ENCODE measurements at regions of chr20 and their contacts with region 1.

Region 1: GRCh38 chr20:11676630-11677284 is 240.9 kb upstream of the BTBD3 start:
- DNase-seq: peak; percentile 61
- H3K4me3 Mint-ChIP-seq: no peak overlapping the region
- H3K27ac Mint-ChIP-seq: no peak overlapping the region
- H3K4me1 Mint-ChIP-seq: no peaks in the 10 kb centered on the region
- H3K27me3 Mint-ChIP-seq: no peaks in the 10 kb centered on the region
- CTCF ChIP-seq: peak; percentile 93

Region 2: GRCh38 chr20:11929947-11930346 is 253.2 kb after region 1 on chr20:
- CTCF ChIA-PET with region 1: no interaction called
- POLR2A ChIA-PET with region 1: no interaction called
- intact Hi-C with region 1: no loop called
- DNase-seq: no peak
- H3K4me3 Mint-ChIP-seq: no peak overlapping the region
- H3K27ac Mint-ChIP-seq: no peak overlapping the region
- H3K4me1 Mint-ChIP-seq: no peaks in the 10 kb centered on the region
- H3K27me3 Mint-ChIP-seq: no peaks in the 10 kb centered on the region
- CTCF ChIP-seq: no peak

Region 3: DNA sequence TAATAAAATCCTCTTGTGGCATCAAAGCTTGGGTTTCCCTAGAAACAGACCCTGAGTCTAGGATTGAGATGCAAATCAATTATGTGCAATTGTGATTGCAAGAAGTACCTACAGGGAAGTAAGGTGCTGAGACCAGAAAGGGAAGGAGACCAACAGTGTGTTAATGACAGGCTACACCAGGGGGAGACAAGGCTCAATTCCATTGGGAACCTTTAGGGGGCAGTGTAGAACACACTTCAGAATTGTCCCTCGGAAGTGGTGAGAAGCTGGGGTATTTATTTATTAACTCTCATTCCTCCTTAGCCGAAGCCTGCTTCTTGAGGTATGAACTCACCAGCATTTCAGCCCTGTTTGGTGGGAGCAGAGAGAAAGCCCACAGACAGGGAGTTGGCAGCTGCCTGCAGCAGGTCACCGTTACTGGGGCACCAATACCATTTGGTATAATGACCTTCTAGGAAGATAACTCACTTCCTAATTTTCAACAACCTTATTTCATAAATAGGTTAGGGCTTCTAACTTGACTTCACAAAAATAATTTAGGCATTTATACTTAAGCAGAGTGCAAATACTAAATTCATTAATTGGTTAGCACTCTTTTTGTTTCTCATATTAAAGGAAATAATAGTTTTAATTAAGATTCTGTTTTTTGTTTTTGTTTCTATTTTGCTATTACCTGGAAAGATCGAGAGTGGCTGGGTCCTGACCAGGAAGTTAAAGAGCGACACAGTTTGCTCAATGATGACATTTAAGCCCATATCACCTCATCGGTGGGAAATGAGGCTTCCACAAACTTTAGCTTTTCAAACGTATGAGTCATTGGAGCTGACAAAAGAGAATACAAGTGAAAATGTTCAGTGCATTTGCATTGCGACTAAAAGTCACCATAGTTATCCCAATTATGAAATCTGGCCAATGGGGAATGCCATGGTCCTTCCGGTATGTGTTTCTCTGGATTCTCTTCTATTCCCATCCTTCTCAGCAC is 335.8 kb after region 1 on chr20:
- CTCF ChIA-PET with region 1: interaction called, 3 read pairs
- POLR2A ChIA-PET with region 1: no interaction called
- intact Hi-C with region 1: loop called (anchors 2 kb)
- DNase-seq: peak; percentile 75
- H3K4me3 Mint-ChIP-seq: no peak overlapping the region
- H3K27ac Mint-ChIP-seq: no peak overlapping the region
- H3K4me1 Mint-ChIP-seq: no peaks in the 10 kb centered on the region
- H3K27me3 Mint-ChIP-seq: no peaks in the 10 kb centered on the region
- CTCF ChIP-seq: peak; percentile 77

Region 4: DNA sequence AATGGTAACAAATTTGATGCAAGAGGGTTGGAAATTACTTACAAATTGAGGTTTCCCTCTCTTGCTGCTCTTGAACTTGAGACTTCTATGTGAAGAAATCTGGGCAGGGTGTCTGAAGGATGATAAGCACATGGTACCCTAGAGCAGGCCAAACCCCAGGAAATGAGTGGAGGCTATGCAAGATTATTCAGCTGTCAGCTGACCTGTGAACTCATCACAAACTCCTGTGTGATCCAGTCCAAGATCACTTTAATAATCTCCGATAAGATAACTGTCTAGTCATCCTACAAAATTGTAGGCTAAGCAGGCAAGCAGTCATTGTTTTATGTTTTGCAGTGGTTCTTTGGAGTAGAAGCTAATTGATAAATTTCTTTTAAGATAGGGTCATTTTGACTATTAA is 454.0 kb after region 1 on chr20:
- CTCF ChIA-PET with region 1: no interaction called
- POLR2A ChIA-PET with region 1: no interaction called
- intact Hi-C with region 1: no loop called
- DNase-seq: no peak
- H3K4me3 Mint-ChIP-seq: no peak overlapping the region
- H3K27ac Mint-ChIP-seq: no peak overlapping the region
- H3K4me1 Mint-ChIP-seq: no peaks in the 10 kb centered on the region
- H3K27me3 Mint-ChIP-seq: no peaks in the 10 kb centered on the region
- CTCF ChIP-seq: no peak

Region 5: DNA sequence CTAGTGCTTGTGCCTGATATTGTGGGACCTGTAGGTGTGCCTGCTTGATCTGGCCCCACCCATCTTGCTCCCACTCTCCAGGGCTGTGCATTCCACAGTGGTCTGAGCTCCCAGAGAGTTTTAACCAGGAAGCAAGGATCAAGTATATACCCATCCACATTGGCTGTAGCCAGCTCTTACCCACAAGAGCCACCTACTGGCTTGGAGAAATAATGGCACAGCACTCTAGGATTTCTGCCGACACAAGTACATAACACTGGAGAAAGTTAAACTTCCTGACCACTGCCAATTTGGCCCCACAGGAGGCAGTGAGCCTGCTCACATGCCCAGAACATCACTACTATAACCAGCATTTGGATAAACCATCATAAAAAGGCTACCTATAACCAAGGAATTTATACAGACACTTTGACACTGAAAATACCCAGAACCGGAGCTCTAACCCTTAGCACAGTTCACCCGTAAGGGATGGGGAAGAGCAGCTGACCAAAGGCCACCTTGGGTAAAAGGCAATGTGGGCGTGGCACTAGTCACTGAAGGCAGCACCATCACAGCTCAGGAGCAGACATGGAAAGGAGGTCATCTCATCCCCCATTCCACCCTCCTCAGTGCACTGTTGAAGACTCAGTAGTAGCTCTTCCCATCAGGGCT is 681.4 kb after region 1 on chr20:
- CTCF ChIA-PET with region 1: interaction called, 10 read pairs
- POLR2A ChIA-PET with region 1: interaction called, 4 read pairs
- intact Hi-C with region 1: no loop called
- DNase-seq: peak; percentile 20
- H3K4me3 Mint-ChIP-seq: no peak overlapping the region
- H3K27ac Mint-ChIP-seq: no peak overlapping the region
- H3K4me1 Mint-ChIP-seq: no peaks in the 10 kb centered on the region
- H3K27me3 Mint-ChIP-seq: no peaks in the 10 kb centered on the region
- CTCF ChIP-seq: no peak